ENCODE measurements at regions of chr3 and their contacts with region 1.

Region 1: DNA sequence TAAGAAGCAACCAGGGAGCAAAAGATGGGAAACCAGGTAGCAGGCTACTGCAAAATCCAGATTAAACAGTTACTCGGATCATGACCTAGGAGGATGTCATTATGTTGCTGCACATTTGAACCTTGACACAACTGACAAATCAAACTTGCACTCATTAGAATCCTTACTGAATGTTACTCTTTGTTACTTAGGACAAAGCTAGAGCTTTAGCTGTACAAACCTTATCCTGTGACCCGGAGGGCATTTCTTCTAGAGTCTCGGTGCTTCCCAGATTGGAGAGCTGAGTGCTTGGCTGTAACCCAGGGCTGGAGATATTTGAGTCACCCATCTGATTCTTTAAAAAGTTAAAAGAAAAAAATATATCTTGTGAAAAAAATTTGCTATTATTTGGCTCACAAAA is 43.4 kb downstream of the DCP1A start:
- DNase-seq: no peak
- H3K4me3 ChIP-seq: no peak overlapping the region
- H3K4me3 Mint-ChIP-seq: no peak overlapping the region
- H3K27ac Mint-ChIP-seq: peak overlapping the region; percentile 17
- H3K4me1 ChIP-seq: 0 out of 2 replicates have a peak, but pooled peaks cover 6% of the 10 kb centered on the region
- H3K4me1 Mint-ChIP-seq: no peaks in the 10 kb centered on the region
- H3K27me3 ChIP-seq: no peaks in the 10 kb centered on the region
- H3K27me3 Mint-ChIP-seq: no peaks in the 10 kb centered on the region
- CTCF ChIP-seq: no peak

Region 2: GRCh38 chr3:53278667-53279066 is 25.3 kb before region 1 on chr3:
- CTCF ChIA-PET with region 1: no interaction called
- POLR2A ChIA-PET with region 1: no interaction called
- intact Hi-C with region 1: no loop called
- DNase-seq: no peak
- H3K4me3 ChIP-seq: no peak overlapping the region
- H3K4me3 Mint-ChIP-seq: no peak overlapping the region
- H3K27ac Mint-ChIP-seq: no peak overlapping the region
- H3K4me1 ChIP-seq: no peaks in the 10 kb centered on the region
- H3K4me1 Mint-ChIP-seq: peaks cover 7% of the 10 kb centered on the region
- H3K27me3 ChIP-seq: no peaks in the 10 kb centered on the region
- H3K27me3 Mint-ChIP-seq: no peaks in the 10 kb centered on the region
- CTCF ChIP-seq: no peak

Region 3: DNA sequence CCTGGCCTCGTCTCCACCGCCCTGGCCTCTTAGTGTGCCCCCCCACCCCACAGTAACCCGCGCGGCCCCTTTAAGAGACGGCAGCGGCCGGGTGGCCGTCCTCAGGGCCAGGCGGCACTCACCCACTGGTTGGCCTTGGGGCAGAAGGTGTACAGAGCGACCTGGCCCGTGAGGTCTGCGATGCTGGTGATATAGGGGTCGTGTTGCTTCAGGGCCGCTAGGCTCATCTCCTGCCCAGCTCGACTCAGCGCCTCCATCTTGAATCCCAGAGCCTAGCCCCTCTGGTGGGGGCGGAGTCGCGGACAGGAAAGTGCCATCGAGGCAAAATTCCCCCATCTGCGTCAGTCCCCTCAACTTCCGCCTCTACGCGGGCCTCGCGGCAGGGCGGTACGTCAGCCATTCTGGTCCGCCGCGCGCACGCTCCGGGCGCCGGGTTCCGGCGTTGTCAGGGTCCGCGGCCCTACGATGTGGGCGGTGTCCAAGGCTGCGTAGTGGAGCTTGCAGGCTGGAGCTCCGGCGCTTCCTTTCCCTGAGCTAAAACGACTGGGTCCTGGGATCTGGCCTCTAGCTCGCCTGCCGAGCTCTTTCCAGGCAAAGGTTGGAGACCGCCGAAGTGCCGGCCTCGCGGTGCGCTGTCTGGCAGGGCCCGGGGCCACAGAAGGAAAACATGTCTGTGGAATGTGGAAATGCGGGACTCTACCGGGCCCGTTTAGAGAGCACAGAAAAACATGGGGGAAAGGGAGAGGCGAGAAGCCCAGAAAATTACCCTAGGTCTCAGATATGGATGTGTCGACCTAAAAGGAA is 43.5 kb after region 1 on chr3 and contains the start of gene DCP1A:
- CTCF ChIA-PET with region 1: no interaction called
- POLR2A ChIA-PET with region 1: interaction called, 9 read pairs
- intact Hi-C with region 1: loop called (anchors 1 kb)
- DNase-seq: peak; percentile 95 to 97
- H3K4me3 ChIP-seq: peak within 1 kb of the TSS; percentile 100
- H3K4me3 Mint-ChIP-seq: peak within 1 kb of the TSS; percentile 91
- H3K27ac Mint-ChIP-seq: peak within 1 kb of the TSS; percentile 98
- H3K4me1 ChIP-seq: peaks cover 39% of the 10 kb centered on the region
- H3K4me1 Mint-ChIP-seq: peaks cover 26% of the 10 kb centered on the region
- H3K27me3 ChIP-seq: no peaks in the 10 kb centered on the region
- H3K27me3 Mint-ChIP-seq: no peaks in the 10 kb centered on the region
- CTCF ChIP-seq: no peak
- total RNA-seq, gene DCP1A: 32.5 and 32.9 TPM in 2 replicates

Region 4: GRCh38 chr3:53375019-53375418 is 71.1 kb after region 1 on chr3:
- CTCF ChIA-PET with region 1: no interaction called
- POLR2A ChIA-PET with region 1: no interaction called
- intact Hi-C with region 1: loop called (anchors 1 kb)
- DNase-seq: peak; percentile 80 to 82
- H3K4me3 ChIP-seq: no peak overlapping the region
- H3K4me3 Mint-ChIP-seq: no peak overlapping the region
- H3K27ac Mint-ChIP-seq: no peak overlapping the region
- H3K4me1 ChIP-seq: no peaks in the 10 kb centered on the region
- H3K4me1 Mint-ChIP-seq: no peaks in the 10 kb centered on the region
- H3K27me3 ChIP-seq: no peaks in the 10 kb centered on the region
- H3K27me3 Mint-ChIP-seq: no peaks in the 10 kb centered on the region
- CTCF ChIP-seq: peak; percentile 86 to 89

Region 5: GRCh38 chr3:53498806-53499641 is 195.1 kb after region 1 on chr3:
- CTCF ChIA-PET with region 1: no interaction called
- POLR2A ChIA-PET with region 1: no interaction called
- intact Hi-C with region 1: loop called (anchors 1 kb)
- DNase-seq: peak; percentile 65
- H3K4me3 ChIP-seq: no peak overlapping the region
- H3K4me3 Mint-ChIP-seq: no peak overlapping the region
- H3K27ac Mint-ChIP-seq: no peak overlapping the region
- H3K4me1 ChIP-seq: peaks cover 12% of the 10 kb centered on the region
- H3K4me1 Mint-ChIP-seq: peaks cover 10% of the 10 kb centered on the region
- H3K27me3 ChIP-seq: no peaks in the 10 kb centered on the region
- H3K27me3 Mint-ChIP-seq: no peaks in the 10 kb centered on the region
- CTCF ChIP-seq: peak; percentile 61 to 67

Region 6: DNA sequence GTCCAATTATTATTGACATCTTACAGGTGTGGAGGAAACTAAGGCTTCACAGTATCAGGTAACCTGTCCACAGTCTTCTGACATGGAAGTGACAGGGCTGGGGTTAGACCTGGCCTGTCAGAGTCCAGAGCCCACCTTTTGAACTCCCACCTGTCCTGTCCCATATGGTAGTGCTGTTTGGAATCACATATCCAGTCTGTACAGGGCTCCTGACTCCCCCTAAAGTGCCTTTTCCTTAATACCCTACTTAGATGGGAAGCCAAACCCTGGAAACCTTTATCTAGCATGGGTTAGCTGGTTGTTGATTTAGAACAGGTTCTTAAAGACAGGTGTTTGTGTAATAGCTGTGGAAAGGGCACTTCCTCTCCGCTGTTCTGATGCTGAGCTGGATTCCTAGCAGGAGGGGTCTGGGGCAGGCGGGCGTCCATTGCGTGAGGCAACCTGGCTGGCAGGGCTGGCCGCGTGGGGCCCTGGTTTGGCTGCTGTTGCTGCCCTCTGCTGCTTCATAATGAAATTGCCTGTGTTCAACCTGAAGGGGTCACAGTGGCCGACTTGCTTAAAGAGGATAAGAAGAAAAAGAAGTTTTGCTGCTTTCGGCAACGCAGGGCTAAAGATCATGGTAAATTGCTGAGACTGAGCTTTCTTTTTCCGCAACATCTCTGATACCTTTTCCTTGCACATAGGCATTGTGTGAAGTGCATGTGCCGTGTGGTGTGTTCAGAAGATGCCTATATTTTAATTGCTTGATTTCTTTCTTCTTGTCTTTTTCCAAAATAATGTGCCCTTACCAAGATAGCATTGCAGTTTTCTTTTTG is 406.1 kb after region 1 on chr3:
- CTCF ChIA-PET with region 1: no interaction called
- POLR2A ChIA-PET with region 1: no interaction called
- intact Hi-C with region 1: loop called (anchors 1 kb)
- DNase-seq: peak; percentile 69 to 83
- H3K4me3 ChIP-seq: no peak overlapping the region
- H3K4me3 Mint-ChIP-seq: no peak overlapping the region
- H3K27ac Mint-ChIP-seq: no peak overlapping the region
- H3K4me1 ChIP-seq: no peaks in the 10 kb centered on the region
- H3K4me1 Mint-ChIP-seq: no peaks in the 10 kb centered on the region
- H3K27me3 ChIP-seq: no peaks in the 10 kb centered on the region
- H3K27me3 Mint-ChIP-seq: no peaks in the 10 kb centered on the region
- CTCF ChIP-seq: peak; percentile 80 to 81

Region 7: DNA sequence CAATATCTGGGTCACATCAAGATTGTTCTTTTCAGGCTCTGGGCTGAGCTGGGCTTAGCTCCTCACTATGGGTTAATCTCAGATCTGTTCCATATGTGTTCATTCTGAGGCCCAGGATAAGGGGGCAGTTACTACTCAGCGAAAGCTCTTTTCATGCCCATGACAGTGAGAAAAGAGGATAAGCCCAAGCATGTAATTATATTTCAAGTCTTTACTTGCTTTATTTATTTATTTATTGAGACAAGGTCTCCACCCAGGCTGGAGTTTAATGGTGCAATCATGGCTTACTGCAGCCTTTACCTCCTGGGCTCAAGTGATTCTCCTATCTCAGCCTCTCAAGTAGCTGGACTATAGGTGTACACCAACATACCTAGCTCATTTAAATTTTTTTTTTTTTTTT is 632.4 kb after region 1 on chr3:
- CTCF ChIA-PET with region 1: no interaction called
- POLR2A ChIA-PET with region 1: no interaction called
- intact Hi-C with region 1: no loop called
- DNase-seq: no peak
- H3K4me3 ChIP-seq: no peak overlapping the region
- H3K4me3 Mint-ChIP-seq: no peak overlapping the region
- H3K27ac Mint-ChIP-seq: no peak overlapping the region
- H3K4me1 ChIP-seq: no peaks in the 10 kb centered on the region
- H3K4me1 Mint-ChIP-seq: no peaks in the 10 kb centered on the region
- H3K27me3 ChIP-seq: no peaks in the 10 kb centered on the region
- H3K27me3 Mint-ChIP-seq: no peaks in the 10 kb centered on the region
- CTCF ChIP-seq: no peak

Measured in Caco-2 (cell line).